ENCODE measurements at regions of chr5 and their contacts with region 1.

Region 1: GRCh38 chr5:150778517-150779396 is at the start of gene SMIM3:
- DNase-seq: peak; percentile 79 to 83 (median 82)
- ATAC-seq: peak; percentile 92
- H3K4me3 ChIP-seq: peak within 1 kb of the TSS; percentile 72
- H3K27ac ChIP-seq: peak within 1 kb of the TSS; percentile 72
- H3K4me1 ChIP-seq: peaks cover 21 to 32% of the 10 kb centered on the region in 2 experiments
- H3K27me3 ChIP-seq: no peaks in the 10 kb centered on the region
- CTCF ChIP-seq: peak; percentile 71 to 81 (median 80)
- EP300 ChIP-seq: peak; percentile 7; the same call in 1 of the 2 replicates
- POLR2A ChIP-seq: peak; percentile 67
- RAD21 ChIP-seq: peak; percentile 82 to 86
- polyA plus RNA-seq, gene SMIM3: 4.1 to 6.7 TPM

Region 2: DNA sequence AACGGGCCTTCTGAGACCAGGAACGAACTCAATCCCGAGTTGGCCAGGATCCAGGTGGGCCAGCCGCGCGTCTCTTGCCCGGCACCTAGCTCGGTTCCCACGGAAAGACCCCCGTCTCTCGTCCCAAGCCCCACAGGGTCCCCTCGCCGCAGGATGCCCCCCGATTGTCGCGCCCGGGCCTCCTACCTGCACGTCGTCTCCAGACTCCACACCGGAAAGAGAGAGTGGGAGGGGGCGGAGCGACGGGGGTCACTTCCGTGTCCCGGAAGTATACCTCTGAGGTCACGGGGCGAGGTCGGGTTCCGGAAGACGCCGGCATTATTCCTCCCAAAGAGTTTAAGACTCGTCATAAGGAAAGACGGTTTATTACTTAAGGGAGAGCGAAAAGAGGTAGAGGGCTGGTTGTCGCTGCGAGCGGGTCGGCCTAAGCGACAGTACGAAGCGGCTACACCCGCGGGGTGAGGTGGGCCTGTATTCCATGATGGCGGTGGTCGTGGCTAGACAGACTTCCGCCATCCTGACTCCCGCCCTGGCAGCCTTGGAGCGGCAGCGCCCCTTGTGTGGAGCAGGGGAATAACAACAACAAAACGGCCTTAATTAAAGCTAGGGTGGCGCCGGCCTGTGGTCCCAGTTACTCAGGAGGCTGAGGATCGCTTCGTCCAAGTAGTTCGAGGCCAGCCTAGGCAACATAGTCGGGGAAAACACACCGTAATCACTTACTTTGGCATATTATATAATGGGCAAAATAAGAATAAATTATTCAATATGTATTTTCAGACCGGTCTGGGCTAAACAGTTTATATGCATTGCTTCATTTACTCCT is 329.0 kb before region 1 on chr5 and contains the start of gene RPS14:
- CTCF ChIA-PET with region 1: no interaction called
- POLR2A ChIA-PET with region 1: interaction called, 4 read pairs
- in situ Hi-C with region 1: no loop called
- intact Hi-C with region 1: loop called (anchors 10 kb)
- DNase-seq: peak; percentile 93 to 96 (median 94)
- ATAC-seq: peak; percentile 94
- H3K4me3 ChIP-seq: peak within 1 kb of the TSS; percentile 87
- H3K27ac ChIP-seq: peak within 1 kb of the TSS; percentile 100
- H3K4me1 ChIP-seq: peaks cover 8 to 11% of the 10 kb centered on the region in 2 experiments; a peak in 4 of 5 replicates
- H3K27me3 ChIP-seq: no peaks in the 10 kb centered on the region
- CTCF ChIP-seq: peak; percentile 92
- EP300 ChIP-seq: 0 out of 2 replicates have a peak, but pooled peaks have one; percentile 20
- POLR2A ChIP-seq: peak; percentile 99
- RAD21 ChIP-seq: peak; percentile 11 to 15; a peak in 2 of 4 replicates
- polyA plus RNA-seq, gene RPS14: 1,824 to 2,512 TPM

Region 3: GRCh38 chr5:150700594-150701293 is 78.0 kb before region 1 on chr5 and contains the start of gene RBM22:
- CTCF ChIA-PET with region 1: no interaction called
- POLR2A ChIA-PET with region 1: interaction called, 5 read pairs
- in situ Hi-C with region 1: no loop called
- intact Hi-C with region 1: loop called (anchors 2 kb)
- DNase-seq: peak; percentile 83 to 96 (median 84)
- ATAC-seq: peak; percentile 97
- H3K4me3 ChIP-seq: peak within 1 kb of the TSS; percentile 87
- H3K27ac ChIP-seq: peak within 1 kb of the TSS; percentile 90
- H3K4me1 ChIP-seq: peaks cover 0 to 20% of the 10 kb centered on the region in 2 experiments; a peak in 3 of 5 replicates
- H3K27me3 ChIP-seq: no peaks in the 10 kb centered on the region
- CTCF ChIP-seq: peak; percentile 57 to 68 (median 65)
- EP300 ChIP-seq: peak; percentile 26; the same call in 1 of the 2 replicates
- POLR2A ChIP-seq: peak; percentile 89
- RAD21 ChIP-seq: peak; percentile 36; a peak in 3 of 4 replicates
- polyA plus RNA-seq, gene RBM22: 33.6 to 65.3 TPM

Region 4: DNA sequence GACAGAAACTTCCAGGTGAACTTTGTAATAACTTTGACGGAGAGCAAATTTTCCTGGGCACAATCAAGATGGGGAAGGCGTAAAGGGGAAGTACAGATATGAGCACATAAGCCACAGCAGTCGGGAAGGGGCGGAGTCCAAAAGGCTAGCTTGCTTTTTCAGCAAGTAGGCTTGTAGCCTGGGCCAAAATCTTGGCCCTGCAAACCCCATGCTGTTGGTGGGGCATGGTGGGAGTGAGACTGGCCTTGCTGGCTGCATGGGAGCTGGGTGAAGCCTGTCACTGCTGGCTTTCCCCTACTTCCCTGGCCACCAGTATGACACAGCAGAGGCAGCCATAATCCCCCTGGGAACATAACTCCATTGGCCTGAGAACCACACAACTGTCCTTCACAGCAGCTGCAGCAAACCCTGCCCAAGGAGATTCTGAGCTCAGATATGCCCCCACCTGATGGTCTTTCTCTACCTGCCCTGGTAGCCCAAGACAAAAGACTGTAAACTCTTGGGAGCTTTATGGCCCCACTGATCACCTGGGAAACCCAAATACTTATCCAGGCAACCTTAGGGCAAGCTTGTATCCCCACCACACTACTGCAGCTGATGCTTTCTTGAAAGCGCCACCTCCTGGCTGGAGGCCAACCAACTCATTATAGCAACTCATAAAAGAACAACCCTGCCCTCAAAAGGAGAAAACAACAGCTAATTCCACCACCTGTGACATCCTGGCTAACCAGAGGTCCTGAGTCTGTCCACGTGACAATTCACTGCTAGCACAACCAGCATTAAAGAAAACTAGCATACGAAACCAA is 44.0 kb before region 1 on chr5:
- CTCF ChIA-PET with region 1: no interaction called
- POLR2A ChIA-PET with region 1: no interaction called
- in situ Hi-C with region 1: no loop called
- intact Hi-C with region 1: loop called (anchors 2 kb)
- DNase-seq: peak in 3 of 4 experiments; percentile 22 to 79 (median 45)
- ATAC-seq: peak; percentile 97
- H3K4me3 ChIP-seq: no peak overlapping the region
- H3K27ac ChIP-seq: peak overlapping the region; percentile 72
- H3K4me1 ChIP-seq: peaks cover 13 to 14% of the 10 kb centered on the region in 2 experiments
- H3K27me3 ChIP-seq: no peaks in the 10 kb centered on the region
- CTCF ChIP-seq: peak; percentile 40 to 49 (median 41); a peak in 5 of 6 replicates
- EP300 ChIP-seq: no peak
- POLR2A ChIP-seq: no peak
- RAD21 ChIP-seq: 0 out of 4 replicates have a peak, but pooled peaks of 1 of the 2 experiments have one; percentile 3

Region 5: GRCh38 chr5:150758531-150759333 is 20.0 kb before region 1 on chr5 and contains the start of gene DCTN4:
- CTCF ChIA-PET with region 1: no interaction called
- POLR2A ChIA-PET with region 1: interaction called, 9 read pairs
- in situ Hi-C with region 1: no loop called
- intact Hi-C with region 1: loop called (anchors 2 kb)
- DNase-seq: peak; percentile 91 to 98 (median 94)
- ATAC-seq: peak; percentile 92
- H3K4me3 ChIP-seq: peak within 1 kb of the TSS; percentile 49
- H3K27ac ChIP-seq: peak within 1 kb of the TSS; percentile 99
- H3K4me1 ChIP-seq: peaks cover 4 to 24% of the 10 kb centered on the region in 2 experiments; a peak in 4 of 5 replicates
- H3K27me3 ChIP-seq: no peaks in the 10 kb centered on the region
- CTCF ChIP-seq: no peak
- EP300 ChIP-seq: no peak
- POLR2A ChIP-seq: peak; percentile 92
- RAD21 ChIP-seq: peak; percentile 8 to 19; a peak in 2 of 4 replicates
- polyA plus RNA-seq, gene DCTN4: 20.4 to 29.6 TPM

Measured in K562 (cell line).